ENCODE measurements at regions of chr1 and their contacts with region 1.

Region 1: GRCh38 chr1:161098210-161099068 is at the start of gene KLHDC9:
- DNase-seq: peak; percentile 87
- ATAC-seq: peak; percentile 80
- H3K4me3 ChIP-seq: peak within 1 kb of the TSS; percentile 51 to 71 (median 60)
- H3K4me3 Mint-ChIP-seq: peak within 1 kb of the TSS; percentile 94
- H3K27ac ChIP-seq: peak within 1 kb of the TSS; percentile 45 to 57
- H3K27ac Mint-ChIP-seq: peak within 1 kb of the TSS; percentile 96
- H3K4me1 ChIP-seq: peaks cover 16 to 31% of the 10 kb centered on the region in 2 donors
- H3K4me1 Mint-ChIP-seq: peaks cover 33% of the 10 kb centered on the region
- H3K27me3 ChIP-seq: no peaks in the 10 kb centered on the region
- H3K27me3 Mint-ChIP-seq: no peaks in the 10 kb centered on the region
- CTCF ChIP-seq: no peak
- total RNA-seq, gene KLHDC9: 1.6 and 4.2 TPM in 2 replicates

Region 2: GRCh38 chr1:161021165-161021960 is 77.1 kb before region 1 on chr1:
- CTCF ChIA-PET with region 1: interaction called, 19 read pairs
- POLR2A ChIA-PET with region 1: interaction called, 3 read pairs
- intact Hi-C with region 1: loop called (anchors 5 kb)
- DNase-seq: peak; percentile 92
- ATAC-seq: peak; percentile 93
- H3K4me3 ChIP-seq: peak overlapping the region; percentile 50 to 83 (median 81)
- H3K4me3 Mint-ChIP-seq: peak overlapping the region; percentile 96
- H3K27ac ChIP-seq: peak overlapping the region; percentile 55 to 85
- H3K27ac Mint-ChIP-seq: peak overlapping the region; percentile 91
- H3K4me1 ChIP-seq: peaks cover 22 to 23% of the 10 kb centered on the region in 2 donors
- H3K4me1 Mint-ChIP-seq: peaks cover 26% of the 10 kb centered on the region
- H3K27me3 ChIP-seq: no peaks in the 10 kb centered on the region
- H3K27me3 Mint-ChIP-seq: no peaks in the 10 kb centered on the region
- CTCF ChIP-seq: no peak

Region 3: DNA sequence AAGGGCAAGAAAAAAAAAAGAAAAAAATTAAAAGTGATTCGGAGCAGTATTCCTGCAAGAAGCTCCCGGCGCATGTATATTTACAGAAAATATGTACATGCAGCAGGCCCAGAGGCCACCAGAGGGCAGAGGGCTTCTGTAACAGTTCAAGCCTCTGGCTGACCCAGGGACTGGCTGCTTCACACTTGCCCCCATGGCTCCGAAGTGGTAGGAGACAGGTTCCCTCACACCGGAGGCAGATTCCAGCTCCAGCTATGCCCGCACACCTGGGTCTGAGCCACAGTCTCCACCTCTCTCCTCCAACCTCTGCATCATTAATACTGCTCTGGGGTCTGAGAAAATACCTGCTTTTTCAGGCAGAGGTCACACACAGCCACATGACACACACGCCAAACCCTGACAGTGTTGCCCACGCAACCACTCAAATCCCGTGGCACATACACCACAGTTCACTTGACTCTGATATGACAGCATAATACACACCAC is 26.5 kb before region 1 on chr1:
- CTCF ChIA-PET with region 1: interaction called, 142 read pairs
- POLR2A ChIA-PET with region 1: interaction called, 23 read pairs
- intact Hi-C with region 1: loop called (anchors 1 kb)
- DNase-seq: peak; percentile 71
- ATAC-seq: no peak
- H3K4me3 ChIP-seq: no peak overlapping the region
- H3K4me3 Mint-ChIP-seq: no peak overlapping the region
- H3K27ac ChIP-seq: no peak overlapping the region
- H3K27ac Mint-ChIP-seq: peak overlapping the region; percentile 12
- H3K4me1 ChIP-seq: peaks cover 20 to 35% of the 10 kb centered on the region in 2 donors
- H3K4me1 Mint-ChIP-seq: peaks cover 37% of the 10 kb centered on the region
- H3K27me3 ChIP-seq: no peaks in the 10 kb centered on the region
- H3K27me3 Mint-ChIP-seq: no peaks in the 10 kb centered on the region
- CTCF ChIP-seq: peak; percentile 81

Region 4: GRCh38 chr1:161153679-161154426 is 55.4 kb after region 1 on chr1 and contains the start of gene UFC1:
- CTCF ChIA-PET with region 1: interaction called, 7 read pairs
- POLR2A ChIA-PET with region 1: interaction called, 3 read pairs
- intact Hi-C with region 1: loop called (anchors 1 kb)
- DNase-seq: peak; percentile 94
- ATAC-seq: peak; percentile 97
- H3K4me3 ChIP-seq: peak within 1 kb of the TSS; percentile 88 to 100 (median 90)
- H3K4me3 Mint-ChIP-seq: peak within 1 kb of the TSS; percentile 97
- H3K27ac ChIP-seq: peak within 1 kb of the TSS; percentile 95 to 98
- H3K27ac Mint-ChIP-seq: peak within 1 kb of the TSS; percentile 99
- H3K4me1 ChIP-seq: peaks cover 15 to 17% of the 10 kb centered on the region in 2 donors
- H3K4me1 Mint-ChIP-seq: peaks cover 26% of the 10 kb centered on the region
- H3K27me3 ChIP-seq: no peaks in the 10 kb centered on the region
- H3K27me3 Mint-ChIP-seq: no peaks in the 10 kb centered on the region
- CTCF ChIP-seq: no peak
- total RNA-seq, gene UFC1: 78.1 and 91.0 TPM in 2 replicates

Region 5: DNA sequence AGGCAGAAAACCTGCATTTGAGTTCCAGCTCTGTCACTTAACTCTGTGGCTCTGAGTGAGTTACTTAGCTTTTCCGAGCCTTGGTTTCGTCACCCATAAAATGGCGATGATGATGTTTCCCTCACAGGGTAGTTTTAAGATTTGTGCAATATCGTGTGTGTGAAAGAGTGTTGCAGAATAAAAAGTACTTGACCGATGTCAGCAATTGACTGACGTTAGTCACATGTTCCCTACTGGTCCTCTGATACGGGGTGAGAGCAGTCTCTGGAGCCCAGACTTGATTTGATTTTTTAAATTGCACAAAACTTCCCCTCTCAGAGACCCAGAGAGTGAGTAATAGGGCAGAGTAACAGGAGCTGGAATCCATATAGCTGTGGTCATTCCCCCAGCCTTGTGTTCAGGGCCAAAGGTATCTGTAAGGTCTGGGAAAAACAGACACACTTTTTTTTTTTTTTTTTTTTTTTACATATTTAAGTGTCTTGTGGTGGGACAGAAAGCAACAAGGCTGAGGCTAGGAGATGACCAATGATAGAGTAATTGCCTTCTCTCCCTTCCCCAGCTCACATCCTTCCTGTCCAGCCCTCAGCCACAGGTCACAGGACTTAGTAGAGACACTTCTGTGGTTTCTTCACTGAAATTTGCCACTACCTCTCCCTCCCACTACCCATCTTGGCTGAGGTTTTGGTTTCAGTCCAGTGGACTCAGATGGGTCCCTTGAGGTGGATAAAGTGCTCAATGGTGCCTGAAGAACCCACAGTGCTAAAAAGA is 118.7 kb after region 1 on chr1:
- CTCF ChIA-PET with region 1: no interaction called
- POLR2A ChIA-PET with region 1: no interaction called
- intact Hi-C with region 1: no loop called
- DNase-seq: peak; percentile 65
- ATAC-seq: peak; percentile 79
- H3K4me3 ChIP-seq: peak overlapping the region in 1 of 5 experiments; percentile 50
- H3K4me3 Mint-ChIP-seq: no peak overlapping the region
- H3K27ac ChIP-seq: no peak overlapping the region
- H3K27ac Mint-ChIP-seq: no peak overlapping the region
- H3K4me1 ChIP-seq: peaks cover 15 to 26% of the 10 kb centered on the region in 2 donors
- H3K4me1 Mint-ChIP-seq: peaks cover 27% of the 10 kb centered on the region
- H3K27me3 ChIP-seq: peaks cover 0 to 28% (median 16%) of the 10 kb centered on the region in 4 experiments
- H3K27me3 Mint-ChIP-seq: peaks cover 30% of the 10 kb centered on the region
- CTCF ChIP-seq: no peak

Region 6: GRCh38 chr1:161389691-161390558 is 291.5 kb after region 1 on chr1:
- CTCF ChIA-PET with region 1: no interaction called
- POLR2A ChIA-PET with region 1: no interaction called
- intact Hi-C with region 1: loop called (anchors 10 kb)
- DNase-seq: peak; percentile 93
- ATAC-seq: peak; percentile 92
- H3K4me3 ChIP-seq: peak overlapping the region; percentile 65 to 89 (median 80)
- H3K4me3 Mint-ChIP-seq: peak overlapping the region; percentile 95
- H3K27ac ChIP-seq: peak overlapping the region; percentile 83
- H3K27ac Mint-ChIP-seq: peak overlapping the region; percentile 94
- H3K4me1 ChIP-seq: peaks cover 9 to 14% of the 10 kb centered on the region in 2 donors
- H3K4me1 Mint-ChIP-seq: peaks cover 18% of the 10 kb centered on the region
- H3K27me3 ChIP-seq: no peaks in the 10 kb centered on the region
- H3K27me3 Mint-ChIP-seq: no peaks in the 10 kb centered on the region
- CTCF ChIP-seq: no peak